Heart left ventricle (tissue), 16 donors: ENCODE measurements at regions of chr6 and their contacts with region 1.

Region 1: DNA sequence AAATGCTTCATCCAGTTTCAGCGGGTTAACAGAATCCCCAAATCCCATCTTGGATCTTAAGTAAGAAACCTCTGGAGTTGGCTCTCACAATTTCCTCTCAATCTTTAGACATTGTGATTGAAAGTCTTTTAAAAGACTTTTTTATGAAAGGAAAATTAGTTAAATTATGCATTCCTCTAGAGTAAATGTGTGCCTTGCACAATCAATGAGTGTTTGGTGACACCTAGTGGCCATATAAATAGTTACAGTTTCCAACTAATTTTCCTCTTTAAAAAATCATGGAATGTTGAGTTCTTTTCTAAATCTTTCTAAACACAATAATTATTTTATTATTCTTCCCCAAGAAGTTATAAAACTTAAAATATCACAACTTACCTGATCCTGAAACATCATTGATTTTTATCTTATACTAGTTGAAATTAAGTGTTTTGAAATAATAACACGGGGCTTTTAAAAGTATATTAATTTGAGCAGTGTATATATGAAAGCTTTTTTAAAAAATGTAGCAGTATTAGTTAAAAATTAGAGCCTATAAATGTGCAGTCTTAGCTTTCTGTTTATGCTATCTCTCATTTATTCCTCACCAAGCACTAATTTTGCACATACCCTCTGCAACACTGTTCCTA is 66.4 kb downstream of the PKHD1 start:
- DNase-seq: no peak
- ATAC-seq: no peak
- H3K4me3 ChIP-seq: no peak overlapping the region
- H3K27ac ChIP-seq: no peak overlapping the region
- H3K4me1 ChIP-seq: no peaks in the 10 kb centered on the region
- H3K27me3 ChIP-seq: peaks cover 0 to 21% (median 0%) of the 10 kb centered on the region in 9 donors
- CTCF ChIP-seq: peak; percentile 62 to 87 (median 81)
- POLR2A ChIP-seq: no peak

Region 2: DNA sequence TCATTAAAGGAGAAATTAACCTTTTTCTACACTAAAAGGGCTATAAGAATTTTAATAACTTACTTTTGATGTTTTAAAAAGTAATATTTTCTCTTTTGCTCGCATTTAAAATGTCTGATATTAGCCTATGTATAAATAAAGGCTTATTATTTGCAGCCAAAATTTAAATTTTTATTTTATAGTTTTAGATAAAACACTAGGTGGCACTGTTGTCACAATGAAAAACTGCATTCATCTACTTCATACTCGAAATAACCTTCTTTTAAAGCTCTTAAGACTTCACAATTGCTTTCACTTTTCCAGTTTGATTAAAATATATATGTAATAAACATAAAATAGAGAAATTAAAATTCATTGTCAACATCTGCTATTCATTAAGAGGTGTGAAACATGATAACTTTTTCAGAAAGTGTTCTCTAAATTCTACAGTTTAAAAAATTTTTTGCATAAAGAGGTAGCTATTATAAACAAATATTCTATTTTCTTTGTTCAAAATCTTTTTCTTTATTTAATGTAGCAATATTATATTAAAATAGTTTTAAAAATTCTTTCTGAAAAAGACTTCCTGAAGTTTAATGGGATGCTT is 1892.5 kb before region 1 on chr6:
- intact Hi-C with region 1: loop called in 2 of 10 experiments (anchors 5 to 10 kb)
- DNase-seq: no peak
- ATAC-seq: no peak
- H3K4me3 ChIP-seq: no peak overlapping the region
- H3K27ac ChIP-seq: no peak overlapping the region
- H3K4me1 ChIP-seq: no peaks in the 10 kb centered on the region
- H3K27me3 ChIP-seq: peaks cover 0 to 13% (median 0%) of the 10 kb centered on the region in 9 donors
- CTCF ChIP-seq: peak in 10 of 12 donors; percentile 37 to 62 (median 51)
- POLR2A ChIP-seq: no peak

Region 3: GRCh38 chr6:50135968-50136367 is 1885.1 kb before region 1 on chr6:
- intact Hi-C with region 1: loop called in 1 of 10 experiments (anchors 10 kb)
- DNase-seq: no peak
- ATAC-seq: no peak
- H3K4me3 ChIP-seq: no peak overlapping the region
- H3K27ac ChIP-seq: no peak overlapping the region
- H3K4me1 ChIP-seq: no peaks in the 10 kb centered on the region
- H3K27me3 ChIP-seq: peaks cover 0 to 7% (median 0%) of the 10 kb centered on the region in 9 donors
- CTCF ChIP-seq: no peak
- POLR2A ChIP-seq: no peak

Region 4: DNA sequence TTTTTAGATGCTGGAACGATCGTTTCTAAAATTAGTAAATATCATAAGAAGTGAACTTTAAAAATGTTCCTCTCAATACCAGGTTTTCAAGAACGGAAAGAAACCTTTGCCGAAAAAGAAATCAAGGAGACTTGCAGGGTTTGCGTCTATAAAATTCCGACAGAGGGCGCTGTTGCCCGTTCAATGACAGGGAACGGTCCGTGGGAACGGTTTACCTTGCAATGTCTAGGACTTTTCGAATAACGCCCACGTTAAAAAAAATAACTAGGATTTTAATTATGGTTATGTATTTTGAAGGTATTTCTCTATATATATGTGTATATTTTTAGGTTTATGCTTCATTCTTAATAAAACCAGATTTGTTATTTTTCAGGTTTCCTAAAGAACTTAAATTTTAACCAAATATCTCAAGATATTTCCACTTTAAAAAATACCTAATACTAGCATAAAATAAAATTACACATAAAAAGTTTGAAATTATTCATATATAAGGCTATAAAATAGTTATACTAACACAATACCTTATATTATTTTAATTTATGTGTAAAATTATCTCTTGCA is 1204.9 kb before region 1 on chr6:
- intact Hi-C with region 1: loop called (anchors 2 to 10 kb)
- DNase-seq: peak in 4 of 5 donors; percentile 33 to 62 (median 44)
- ATAC-seq: no peak
- H3K4me3 ChIP-seq: peak overlapping the region in 9 of 12 donors; percentile 2 to 51 (median 36)
- H3K27ac ChIP-seq: no peak overlapping the region
- H3K4me1 ChIP-seq: peaks cover 0 to 20% (median 1%) of the 10 kb centered on the region in 12 donors
- H3K27me3 ChIP-seq: peaks cover 11 to 85% (median 68%) of the 10 kb centered on the region in 9 donors
- CTCF ChIP-seq: peak; percentile 70 to 89 (median 79)
- POLR2A ChIP-seq: no peak

Region 5: DNA sequence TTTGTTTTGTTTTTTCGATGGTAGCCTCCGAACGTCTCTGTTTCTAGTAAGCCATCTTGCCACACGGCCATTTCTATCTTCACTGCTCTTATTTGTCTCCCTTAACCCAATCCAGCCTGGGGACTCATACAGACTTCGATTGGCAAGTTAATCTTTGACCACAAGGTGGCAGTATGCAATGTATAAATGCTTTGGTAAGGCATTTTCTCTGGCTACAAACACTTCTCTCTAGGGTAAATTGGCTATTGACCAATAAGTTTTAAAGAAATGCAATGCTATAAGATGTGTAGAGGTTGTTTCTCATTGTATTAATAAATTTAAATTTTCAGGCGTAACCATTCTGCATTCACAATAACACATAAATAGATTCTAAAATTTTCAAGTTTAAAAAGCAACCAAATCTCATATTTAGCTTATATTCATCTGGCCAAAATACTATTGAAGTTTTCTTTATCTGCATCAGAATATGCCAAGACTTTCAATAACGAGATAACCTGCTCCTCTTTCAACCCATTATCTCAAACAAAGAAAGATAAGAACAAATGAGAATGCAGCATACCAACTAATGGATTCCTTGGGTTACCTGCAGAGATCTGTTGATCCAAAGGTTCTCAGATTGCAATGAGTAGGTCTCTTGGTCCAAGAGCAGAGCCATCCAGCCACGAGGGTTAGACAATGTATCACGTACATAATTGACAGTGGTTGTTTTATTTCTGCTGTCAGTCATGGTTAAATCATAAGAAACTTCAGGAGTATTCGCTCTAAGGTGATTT is 165.6 kb before region 1 on chr6:
- intact Hi-C with region 1: loop called in 8 of 10 experiments (anchors 5 to 10 kb)
- DNase-seq: no peak
- ATAC-seq: no peak
- H3K4me3 ChIP-seq: no peak overlapping the region
- H3K27ac ChIP-seq: no peak overlapping the region
- H3K4me1 ChIP-seq: no peaks in the 10 kb centered on the region
- H3K27me3 ChIP-seq: peaks cover 0 to 30% (median 0%) of the 10 kb centered on the region in 9 donors
- CTCF ChIP-seq: peak; percentile 36 to 68 (median 52)
- POLR2A ChIP-seq: no peak